ENCODE measurements at regions of chr10 and their contacts with region 1.

Region 1: DNA sequence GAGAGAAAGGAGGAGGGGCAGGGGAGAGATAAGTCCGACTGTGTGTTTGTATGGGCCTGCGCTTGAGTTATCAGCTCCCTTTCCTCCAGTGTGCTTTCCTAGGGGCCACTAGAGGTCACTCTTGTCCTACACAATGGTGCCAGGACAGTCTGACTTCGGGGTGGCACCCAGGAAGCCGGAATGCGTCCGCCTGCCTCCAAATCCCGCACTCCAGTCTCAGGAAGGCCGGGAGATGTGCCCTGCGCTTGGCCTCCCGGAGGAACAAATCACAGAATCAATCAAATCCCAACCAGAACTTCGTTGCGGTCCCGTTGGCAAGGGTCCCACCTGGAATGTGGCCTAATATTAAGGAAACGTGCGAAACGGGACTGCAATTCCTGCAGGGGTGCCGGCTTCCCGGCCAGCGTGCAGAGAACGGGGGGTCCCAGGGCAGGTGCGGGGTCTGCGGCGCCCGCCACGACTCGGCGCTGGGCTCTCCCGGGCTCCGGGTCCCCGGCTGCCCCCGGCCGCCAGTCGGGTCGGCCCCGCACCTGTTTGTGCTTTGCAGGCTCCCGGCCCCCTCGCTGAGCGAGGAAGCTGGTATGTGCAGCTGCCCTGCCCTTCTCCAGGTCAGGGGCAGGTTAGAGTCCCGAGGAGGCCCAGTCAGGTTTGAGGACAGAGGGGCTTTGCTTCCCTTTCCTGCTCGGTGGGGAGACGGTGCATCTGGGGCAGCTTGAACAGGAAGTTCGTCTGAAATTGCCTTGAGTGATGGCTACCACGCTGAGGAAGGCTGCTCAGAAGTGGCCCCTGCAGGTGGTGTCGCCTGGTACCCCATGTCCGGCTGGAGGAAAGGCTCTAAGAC is 21.0 kb upstream of the HPS1 start:
- DNase-seq: peak; percentile 76 to 83 (median 77)
- ATAC-seq: peak; percentile 99
- H3K4me3 ChIP-seq: peak overlapping the region; percentile 17
- H3K4me1 ChIP-seq: no peaks in the 10 kb centered on the region
- CTCF ChIP-seq: peak; percentile 49

Region 2: GRCh38 chr10:99172130-99172738 is 704.5 kb after region 1 on chr10:
- intact Hi-C with region 1: loop called in 1 of 2 experiments (anchors 10 kb)
- DNase-seq: peak in 2 of 3 donors; percentile 46 to 50
- ATAC-seq: no peak
- H3K4me3 ChIP-seq: no peak overlapping the region
- H3K4me1 ChIP-seq: no peaks in the 10 kb centered on the region
- CTCF ChIP-seq: peak; percentile 17

Region 3: GRCh38 chr10:99248824-99249223 is 781.1 kb after region 1 on chr10:
- intact Hi-C with region 1: loop called (anchors 5 kb)
- DNase-seq: no peak
- ATAC-seq: no peak
- H3K4me3 ChIP-seq: no peak overlapping the region
- H3K4me1 ChIP-seq: no peaks in the 10 kb centered on the region
- CTCF ChIP-seq: no peak